ENCODE measurements at regions of chr3 and their contacts with region 1.

Region 1: GRCh38 chr3:188796122-188796631 is 375.6 kb upstream of the TPRG1 start:
- H3K4me3 Mint-ChIP-seq: no peak overlapping the region
- H3K27ac Mint-ChIP-seq: peak overlapping the region; percentile 84
- H3K4me1 Mint-ChIP-seq: peaks cover 65% of the 10 kb centered on the region
- H3K27me3 Mint-ChIP-seq: no peaks in the 10 kb centered on the region

Region 2: GRCh38 chr3:188687389-188687788 is 108.8 kb before region 1 on chr3:
- intact Hi-C with region 1: no loop called
- H3K4me3 Mint-ChIP-seq: no peak overlapping the region
- H3K27ac Mint-ChIP-seq: peak overlapping the region; percentile 80
- H3K4me1 Mint-ChIP-seq: peaks cover 79% of the 10 kb centered on the region
- H3K27me3 Mint-ChIP-seq: no peaks in the 10 kb centered on the region

Region 3: DNA sequence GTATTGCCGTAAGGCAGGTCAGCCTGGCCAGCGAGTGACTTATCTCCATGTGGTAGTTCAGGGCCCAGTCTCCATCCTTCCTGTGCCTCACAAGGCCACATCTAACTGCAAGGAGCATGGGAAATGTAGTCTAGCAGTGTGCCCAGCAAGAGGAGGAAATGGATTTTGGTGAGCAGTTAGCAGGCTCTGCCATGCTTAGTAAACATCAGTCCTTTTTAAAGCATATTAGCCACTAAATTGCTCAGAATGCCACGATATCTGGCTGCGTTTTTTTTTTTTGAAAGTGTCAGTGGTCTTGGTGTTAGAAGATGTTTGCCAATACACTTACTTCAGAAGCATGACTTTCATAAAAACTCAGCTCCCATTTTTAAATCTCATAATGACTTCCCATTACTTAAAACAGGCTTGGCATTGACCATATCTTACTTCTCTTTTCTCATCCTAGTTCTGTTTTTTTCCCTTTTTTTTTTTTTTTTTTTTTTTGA is 94.7 kb before region 1 on chr3:
- intact Hi-C with region 1: loop called (anchors 10 kb)
- H3K4me3 Mint-ChIP-seq: peak overlapping the region; percentile 68
- H3K27ac Mint-ChIP-seq: peak overlapping the region; percentile 86
- H3K4me1 Mint-ChIP-seq: peaks cover 55% of the 10 kb centered on the region
- H3K27me3 Mint-ChIP-seq: no peaks in the 10 kb centered on the region

Region 4: DNA sequence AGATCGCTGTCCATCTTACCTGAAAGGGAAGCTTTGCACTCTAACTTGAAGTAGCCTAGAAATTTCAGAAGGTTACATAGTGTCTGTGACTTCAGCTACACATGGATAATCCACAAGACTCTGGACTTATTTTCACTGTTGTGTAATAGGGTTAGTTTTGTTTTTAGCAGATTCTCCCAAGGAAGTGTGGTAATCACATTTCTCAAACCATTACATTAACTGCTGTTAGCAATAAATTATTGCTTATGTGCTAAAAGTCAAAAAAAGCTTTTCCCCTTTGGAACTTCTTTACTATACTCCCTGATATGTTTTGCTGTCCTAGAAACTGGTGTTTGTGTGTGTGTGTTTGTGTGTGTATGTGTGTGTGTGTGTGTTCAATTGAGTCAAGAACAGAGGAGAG is 23.8 kb after region 1 on chr3:
- intact Hi-C with region 1: loop called (anchors 1 kb)
- H3K4me3 Mint-ChIP-seq: no peak overlapping the region
- H3K27ac Mint-ChIP-seq: peak overlapping the region; percentile 91
- H3K4me1 Mint-ChIP-seq: peaks cover 66% of the 10 kb centered on the region
- H3K27me3 Mint-ChIP-seq: no peaks in the 10 kb centered on the region

Measured in dendritic cell treated with granulocyte-macrophage colony-stimulating factor and Interleukin-4, amounts not matched to agents 40 ng/mL and 50 ng/mL, for 4 days (primary cell).